ENCODE measurements at regions of chr2 and their contacts with region 1.

Region 1: GRCh38 chr2:132438691-132439090 is 22.1 kb downstream of the GPR39 start:
- DNase-seq: peak; percentile 65
- H3K4me3 ChIP-seq: no peak overlapping the region
- H3K27ac ChIP-seq: peak overlapping the region; percentile 75
- H3K27me3 ChIP-seq: no peaks in the 10 kb centered on the region
- CTCF ChIP-seq: no peak

Region 2: GRCh38 chr2:132448771-132449170 is 10.1 kb after region 1 on chr2:
- CTCF ChIA-PET with region 1: interaction called, 18 read pairs
- POLR2A ChIA-PET with region 1: no interaction called
- DNase-seq: peak; percentile 18
- H3K4me3 ChIP-seq: no peak overlapping the region
- H3K27ac ChIP-seq: no peak overlapping the region
- H3K27me3 ChIP-seq: no peaks in the 10 kb centered on the region
- CTCF ChIP-seq: peak; percentile 84

Measured in AG04450 (cell line).